ENCODE measurements at regions of chr6 and their contacts with region 1.

Region 1: DNA sequence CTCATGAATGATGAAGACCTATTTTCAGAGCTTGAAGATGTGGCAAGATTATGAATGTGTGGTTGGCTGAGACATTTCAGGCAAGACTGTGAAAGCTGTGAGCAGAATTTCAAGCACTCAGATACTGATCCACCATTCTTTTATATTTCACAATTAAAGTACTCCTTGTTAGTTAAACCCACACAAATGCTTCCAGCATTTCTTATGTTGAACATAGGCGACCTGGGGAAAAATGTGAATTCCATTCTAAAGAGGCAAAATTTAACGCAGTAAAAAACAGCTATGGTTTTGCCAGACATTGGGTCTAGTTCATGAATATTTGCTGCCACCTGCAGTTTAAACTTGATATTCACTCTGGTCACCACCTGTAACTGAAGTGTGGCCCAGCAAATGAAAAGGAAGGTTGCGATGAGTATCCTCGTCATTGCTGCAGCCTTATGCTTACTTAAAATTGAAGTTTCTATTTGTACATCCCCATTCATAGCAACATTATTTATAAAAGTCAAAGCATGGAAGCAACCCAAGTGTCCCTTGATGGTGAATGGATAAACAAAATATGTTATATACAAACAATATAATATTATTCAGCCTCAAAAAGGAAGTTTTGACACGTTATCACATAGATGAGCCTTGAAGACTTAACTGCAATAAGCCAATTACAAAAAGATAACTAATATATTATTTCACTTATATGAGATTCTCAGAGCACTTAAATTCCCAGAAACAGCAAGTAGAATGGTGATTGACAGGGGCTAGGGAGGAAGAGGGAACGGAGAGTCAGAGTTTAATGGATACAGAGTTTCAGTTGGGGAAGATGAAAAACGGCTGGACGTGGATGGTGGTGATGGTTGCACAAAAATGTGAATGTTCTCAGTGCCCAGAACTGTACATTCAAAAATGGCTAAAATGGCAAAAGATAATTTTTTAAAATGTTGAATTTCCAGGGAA is 32.4 kb upstream of the FAM184A start:
- DNase-seq: peak; percentile 61
- ATAC-seq: peak; percentile 79
- H3K4me3 Mint-ChIP-seq: no peak overlapping the region
- H3K27ac Mint-ChIP-seq: no peak overlapping the region
- H3K4me1 Mint-ChIP-seq: peaks cover 14% of the 10 kb centered on the region
- H3K27me3 Mint-ChIP-seq: no peaks in the 10 kb centered on the region

Region 2: DNA sequence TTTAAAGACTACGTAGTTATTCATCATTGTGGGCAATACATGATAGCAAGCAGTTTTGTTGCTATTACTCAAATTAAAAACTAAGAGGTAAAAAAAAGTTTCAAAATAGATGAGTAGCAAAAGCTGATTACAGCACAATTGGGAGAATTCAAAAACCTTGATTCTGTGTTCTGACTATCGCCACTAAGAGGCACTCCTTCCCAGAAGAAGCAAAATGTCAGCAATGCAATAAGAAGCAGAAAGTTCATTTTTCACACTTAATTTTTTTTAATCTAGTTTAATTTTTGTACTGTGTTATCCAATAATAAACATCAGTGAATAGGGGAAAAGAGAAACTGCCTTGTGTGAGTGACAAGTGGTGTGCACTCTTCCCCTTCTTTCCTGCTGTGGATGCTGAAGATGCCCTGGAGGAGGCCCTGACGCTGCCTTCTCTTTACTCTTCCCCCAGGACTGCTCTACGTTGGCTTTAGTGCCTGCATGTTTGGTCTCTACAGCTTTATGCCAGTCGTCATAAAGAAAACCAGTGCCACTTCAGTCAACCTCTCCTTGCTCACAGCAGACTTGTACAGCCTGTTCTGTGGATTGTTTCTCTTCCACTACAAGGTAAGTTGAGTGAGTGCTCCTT is 826.0 kb before region 1 on chr6:
- CTCF ChIA-PET with region 1: interaction called, 12 read pairs
- POLR2A ChIA-PET with region 1: no interaction called
- DNase-seq: no peak
- ATAC-seq: no peak
- H3K4me3 Mint-ChIP-seq: no peak overlapping the region
- H3K27ac Mint-ChIP-seq: no peak overlapping the region
- H3K4me1 Mint-ChIP-seq: peaks cover 7% of the 10 kb centered on the region
- H3K27me3 Mint-ChIP-seq: peaks cover 21% of the 10 kb centered on the region

Region 3: DNA sequence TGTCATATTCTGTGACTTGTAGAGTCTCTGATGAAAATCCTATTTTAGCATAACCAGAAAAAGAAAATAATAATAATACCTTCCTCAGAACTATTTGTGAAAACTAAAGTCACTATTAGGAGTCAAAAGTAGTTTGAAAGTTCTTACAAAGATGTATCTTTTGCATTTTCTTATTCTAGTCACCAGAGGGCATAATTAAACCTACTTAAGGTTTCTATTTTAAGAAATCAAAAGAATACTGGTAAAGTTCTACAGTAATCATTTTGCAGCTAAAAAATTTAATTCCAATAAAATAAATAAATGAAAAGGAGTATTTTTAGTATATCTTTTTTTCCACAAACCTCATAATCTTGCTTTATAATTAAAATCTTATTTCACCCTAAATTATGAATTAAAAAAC is 147.9 kb before region 1 on chr6:
- CTCF ChIA-PET with region 1: interaction called, 66 read pairs
- POLR2A ChIA-PET with region 1: no interaction called
- DNase-seq: no peak
- ATAC-seq: no peak
- H3K4me3 Mint-ChIP-seq: no peak overlapping the region
- H3K27ac Mint-ChIP-seq: no peak overlapping the region
- H3K4me1 Mint-ChIP-seq: peaks cover 13% of the 10 kb centered on the region
- H3K27me3 Mint-ChIP-seq: no peaks in the 10 kb centered on the region

Region 4: DNA sequence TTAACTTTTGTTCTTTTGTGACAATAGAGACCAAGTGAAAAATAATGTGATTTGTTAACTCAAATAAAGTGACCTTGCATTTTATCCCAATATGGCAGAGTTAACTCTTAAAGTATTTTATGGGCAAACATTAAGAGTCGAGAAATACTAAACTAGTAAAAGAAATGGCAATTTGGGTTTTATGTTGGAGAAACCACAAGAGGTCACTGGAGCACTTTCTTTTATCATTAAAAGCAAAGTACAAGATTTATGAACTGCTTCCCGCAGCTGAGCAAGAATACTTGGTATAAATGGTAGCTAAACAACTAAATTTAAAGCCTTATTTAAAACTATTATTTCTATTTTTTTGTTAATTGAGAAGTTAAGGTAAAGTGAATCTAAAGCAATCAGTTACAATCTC is 142.5 kb before region 1 on chr6:
- CTCF ChIA-PET with region 1: interaction called, 66 read pairs
- POLR2A ChIA-PET with region 1: no interaction called
- DNase-seq: no peak
- ATAC-seq: no peak
- H3K4me3 Mint-ChIP-seq: no peak overlapping the region
- H3K27ac Mint-ChIP-seq: no peak overlapping the region
- H3K4me1 Mint-ChIP-seq: no peaks in the 10 kb centered on the region
- H3K27me3 Mint-ChIP-seq: no peaks in the 10 kb centered on the region

Region 5: DNA sequence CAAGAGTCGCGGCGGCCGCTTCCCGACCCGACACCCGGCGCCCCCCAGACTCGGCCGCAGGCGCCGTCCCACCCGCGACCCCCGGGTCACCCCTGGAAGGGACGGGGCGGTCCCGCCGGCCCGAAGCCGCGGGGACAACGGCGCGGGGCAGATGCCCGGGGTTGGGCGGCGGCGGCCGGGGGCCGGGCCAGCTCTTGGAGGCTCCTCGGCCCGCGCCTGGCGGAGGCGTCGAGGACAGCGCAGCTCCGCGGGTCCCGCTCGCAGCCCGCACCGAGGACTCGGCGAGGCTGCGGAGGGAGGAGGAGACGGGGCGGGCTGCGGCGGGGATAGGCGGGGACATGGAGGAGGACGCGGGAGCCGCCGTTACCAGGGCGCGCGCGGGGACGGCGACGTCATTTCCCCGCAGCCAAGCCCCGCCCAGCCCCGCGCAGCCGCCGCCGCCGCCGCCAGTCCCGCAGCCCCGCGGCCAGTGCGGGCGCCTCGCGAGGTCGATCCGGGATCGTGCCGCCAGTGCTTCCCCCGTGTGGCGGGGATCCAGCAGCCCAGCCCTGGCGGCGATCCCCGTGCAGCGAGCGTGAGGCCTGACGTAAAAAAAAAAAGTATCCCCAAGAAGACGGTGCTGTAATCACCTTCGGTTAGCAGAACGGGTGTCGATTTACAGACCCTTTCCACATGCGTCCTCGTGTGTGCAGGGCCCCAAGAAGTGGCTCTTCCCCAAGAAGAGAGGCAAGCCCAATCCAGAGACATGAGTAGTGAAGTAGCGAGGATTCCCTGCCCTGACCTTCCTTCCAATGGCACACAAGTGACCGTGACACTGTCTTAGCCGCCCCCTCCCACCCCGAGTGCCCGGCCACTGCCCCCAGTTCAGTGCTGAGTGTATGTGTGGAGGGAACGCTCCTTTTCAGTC is 32.2 kb before region 1 on chr6 and contains the start of gene FAM184A:
- CTCF ChIA-PET with region 1: interaction called, 12 read pairs
- POLR2A ChIA-PET with region 1: no interaction called
- DNase-seq: peak; percentile 73
- ATAC-seq: peak; percentile 83
- H3K4me3 Mint-ChIP-seq: peak within 1 kb of the TSS; percentile 77
- H3K27ac Mint-ChIP-seq: peak within 1 kb of the TSS; percentile 53
- H3K4me1 Mint-ChIP-seq: peaks cover 24% of the 10 kb centered on the region
- H3K27me3 Mint-ChIP-seq: peaks cover 15% of the 10 kb centered on the region
- total RNA-seq, gene FAM184A: 2.2 to 2.7 TPM

Region 6: GRCh38 chr6:119096721-119097565 is 13.9 kb before region 1 on chr6:
- CTCF ChIA-PET with region 1: interaction called, 29 read pairs
- POLR2A ChIA-PET with region 1: no interaction called
- DNase-seq: no peak
- ATAC-seq: no peak
- H3K4me3 Mint-ChIP-seq: no peak overlapping the region
- H3K27ac Mint-ChIP-seq: no peak overlapping the region
- H3K4me1 Mint-ChIP-seq: peaks cover 2% of the 10 kb centered on the region
- H3K27me3 Mint-ChIP-seq: no peaks in the 10 kb centered on the region

Region 7: DNA sequence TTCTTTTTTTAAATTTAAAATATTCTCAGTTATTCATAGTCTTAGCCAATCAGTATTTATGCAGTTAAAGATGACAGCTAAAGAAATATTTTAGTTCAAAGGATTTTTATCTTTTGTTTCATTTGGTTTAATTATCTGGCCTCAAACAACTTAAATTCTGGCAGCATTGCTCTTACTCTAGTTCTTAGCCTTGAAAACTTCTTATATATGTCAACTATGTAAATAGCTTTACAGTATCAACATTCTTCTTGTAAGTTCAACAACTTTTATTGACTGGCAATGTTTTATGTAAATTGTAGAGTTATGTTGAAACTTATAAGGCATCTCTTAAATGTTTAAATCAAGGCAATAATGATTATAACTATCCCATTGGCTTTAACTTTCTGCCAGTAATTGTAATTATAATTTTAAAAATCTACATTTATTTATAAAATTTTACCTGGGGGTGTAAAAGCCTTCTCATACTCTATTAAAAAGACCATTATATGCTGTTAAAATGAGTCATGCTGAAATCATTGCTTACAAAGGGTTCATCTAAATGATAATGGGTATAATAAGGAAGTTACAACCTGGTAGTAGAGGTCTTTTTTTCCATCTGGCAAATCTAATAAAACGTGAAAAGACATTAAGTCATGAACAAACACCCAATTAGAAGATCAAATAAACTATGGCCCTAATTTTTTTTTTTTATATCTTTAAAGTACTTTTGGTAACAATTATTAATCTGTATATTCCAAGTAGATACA is 13.4 kb after region 1 on chr6:
- CTCF ChIA-PET with region 1: interaction called, 12 read pairs
- POLR2A ChIA-PET with region 1: no interaction called
- DNase-seq: no peak
- ATAC-seq: no peak
- H3K4me3 Mint-ChIP-seq: no peak overlapping the region
- H3K27ac Mint-ChIP-seq: no peak overlapping the region
- H3K4me1 Mint-ChIP-seq: peaks cover 3% of the 10 kb centered on the region
- H3K27me3 Mint-ChIP-seq: peaks cover 5% of the 10 kb centered on the region